Caco-2 (cell line): ENCODE measurements at regions of chr10 and their contacts with region 1.

Region 1: GRCh38 chr10:32207544-32207943 is 139.4 kb downstream of the EPC1 start:
- DNase-seq: peak; percentile 79 to 84
- H3K4me3 ChIP-seq: no peak overlapping the region
- H3K4me3 Mint-ChIP-seq: no peak overlapping the region
- H3K27ac Mint-ChIP-seq: no peak overlapping the region
- H3K4me1 ChIP-seq: peaks cover 5% of the 10 kb centered on the region; the same call in 1 of the 2 replicates
- H3K4me1 Mint-ChIP-seq: peaks cover 7% of the 10 kb centered on the region
- H3K27me3 ChIP-seq: no peaks in the 10 kb centered on the region
- H3K27me3 Mint-ChIP-seq: no peaks in the 10 kb centered on the region
- CTCF ChIP-seq: peak; percentile 90 to 97

Region 2: GRCh38 chr10:31836569-31837406 is 370.8 kb before region 1 on chr10:
- CTCF ChIA-PET with region 1: no interaction called
- POLR2A ChIA-PET with region 1: no interaction called
- intact Hi-C with region 1: loop called (anchors 1 kb)
- DNase-seq: peak in 1 of 2 experiments; percentile 62
- H3K4me3 ChIP-seq: no peak overlapping the region
- H3K4me3 Mint-ChIP-seq: no peak overlapping the region
- H3K27ac Mint-ChIP-seq: no peak overlapping the region
- H3K4me1 ChIP-seq: no peaks in the 10 kb centered on the region
- H3K4me1 Mint-ChIP-seq: no peaks in the 10 kb centered on the region
- H3K27me3 ChIP-seq: no peaks in the 10 kb centered on the region
- H3K27me3 Mint-ChIP-seq: no peaks in the 10 kb centered on the region
- CTCF ChIP-seq: peak; percentile 84 to 94

Region 3: GRCh38 chr10:31947144-31947926 is 260.2 kb before region 1 on chr10:
- CTCF ChIA-PET with region 1: no interaction called
- POLR2A ChIA-PET with region 1: no interaction called
- intact Hi-C with region 1: loop called (anchors 5 kb)
- DNase-seq: peak; percentile 74 to 84
- H3K4me3 ChIP-seq: peak overlapping the region; percentile 10
- H3K4me3 Mint-ChIP-seq: peak overlapping the region; percentile 65
- H3K27ac Mint-ChIP-seq: peak overlapping the region; percentile 70
- H3K4me1 ChIP-seq: peaks cover 42% of the 10 kb centered on the region
- H3K4me1 Mint-ChIP-seq: peaks cover 26% of the 10 kb centered on the region
- H3K27me3 ChIP-seq: no peaks in the 10 kb centered on the region
- H3K27me3 Mint-ChIP-seq: no peaks in the 10 kb centered on the region
- CTCF ChIP-seq: peak; percentile 47 to 82

Region 4: GRCh38 chr10:32005050-32005449 is 202.5 kb before region 1 on chr10:
- CTCF ChIA-PET with region 1: no interaction called
- POLR2A ChIA-PET with region 1: no interaction called
- intact Hi-C with region 1: loop called (anchors 2 kb)
- DNase-seq: peak; percentile 68 to 73
- H3K4me3 ChIP-seq: no peak overlapping the region
- H3K4me3 Mint-ChIP-seq: no peak overlapping the region
- H3K27ac Mint-ChIP-seq: no peak overlapping the region
- H3K4me1 ChIP-seq: no peaks in the 10 kb centered on the region; the same call in 1 of the 2 replicates
- H3K4me1 Mint-ChIP-seq: peaks cover 21% of the 10 kb centered on the region
- H3K27me3 ChIP-seq: no peaks in the 10 kb centered on the region
- H3K27me3 Mint-ChIP-seq: no peaks in the 10 kb centered on the region
- CTCF ChIP-seq: peak; percentile 78 to 83

Region 5: DNA sequence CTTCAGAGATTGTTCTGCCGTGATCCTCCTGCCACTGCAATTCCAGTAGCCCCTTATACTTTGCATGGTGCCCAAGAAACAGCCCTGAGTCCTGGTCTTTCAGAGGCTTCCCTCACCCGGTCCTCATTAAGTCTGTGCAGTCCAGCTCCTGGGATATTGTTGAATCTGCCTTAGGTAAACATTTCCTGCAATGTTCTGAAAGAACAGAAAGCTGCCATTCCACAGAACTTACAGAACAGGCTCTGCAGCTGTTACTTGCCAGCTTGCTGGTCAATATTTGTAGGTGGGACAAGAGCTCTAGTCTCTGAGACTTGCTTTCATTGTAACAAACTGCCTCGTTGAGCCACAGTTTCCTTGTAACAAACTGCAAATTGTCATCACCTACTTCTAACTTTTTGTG is 36.3 kb before region 1 on chr10:
- CTCF ChIA-PET with region 1: interaction called, 11 read pairs
- POLR2A ChIA-PET with region 1: no interaction called
- intact Hi-C with region 1: loop called (anchors 2 kb)
- DNase-seq: peak; percentile 87 to 89
- H3K4me3 ChIP-seq: no peak overlapping the region
- H3K4me3 Mint-ChIP-seq: peak overlapping the region; percentile 63
- H3K27ac Mint-ChIP-seq: peak overlapping the region; percentile 96
- H3K4me1 ChIP-seq: peaks cover 29% of the 10 kb centered on the region
- H3K4me1 Mint-ChIP-seq: peaks cover 23% of the 10 kb centered on the region
- H3K27me3 ChIP-seq: no peaks in the 10 kb centered on the region
- H3K27me3 Mint-ChIP-seq: no peaks in the 10 kb centered on the region
- CTCF ChIP-seq: no peak

Region 6: GRCh38 chr10:32232378-32232777 is 24.8 kb after region 1 on chr10:
- CTCF ChIA-PET with region 1: interaction called, 6 read pairs
- POLR2A ChIA-PET with region 1: interaction called, 16 read pairs
- intact Hi-C with region 1: no loop called
- DNase-seq: peak; percentile 56 to 64
- H3K4me3 ChIP-seq: no peak overlapping the region
- H3K4me3 Mint-ChIP-seq: no peak overlapping the region
- H3K27ac Mint-ChIP-seq: no peak overlapping the region
- H3K4me1 ChIP-seq: no peaks in the 10 kb centered on the region; the same call in 1 of the 2 replicates
- H3K4me1 Mint-ChIP-seq: no peaks in the 10 kb centered on the region
- H3K27me3 ChIP-seq: no peaks in the 10 kb centered on the region
- H3K27me3 Mint-ChIP-seq: no peaks in the 10 kb centered on the region
- CTCF ChIP-seq: no peak

Region 7: GRCh38 chr10:32367793-32368453 is 160.4 kb after region 1 on chr10:
- CTCF ChIA-PET with region 1: no interaction called
- POLR2A ChIA-PET with region 1: no interaction called
- intact Hi-C with region 1: loop called (anchors 5 kb)
- DNase-seq: peak; percentile 75 to 81
- H3K4me3 ChIP-seq: no peak overlapping the region
- H3K4me3 Mint-ChIP-seq: peak overlapping the region; percentile 22
- H3K27ac Mint-ChIP-seq: no peak overlapping the region
- H3K4me1 ChIP-seq: no peaks in the 10 kb centered on the region; the same call in 1 of the 2 replicates
- H3K4me1 Mint-ChIP-seq: peaks cover 11% of the 10 kb centered on the region
- H3K27me3 ChIP-seq: no peaks in the 10 kb centered on the region
- H3K27me3 Mint-ChIP-seq: no peaks in the 10 kb centered on the region
- CTCF ChIP-seq: peak; percentile 91 to 93

Region 8: GRCh38 chr10:32577448-32577847 is 369.9 kb after region 1 on chr10:
- CTCF ChIA-PET with region 1: no interaction called
- POLR2A ChIA-PET with region 1: no interaction called
- intact Hi-C with region 1: no loop called
- DNase-seq: no peak
- H3K4me3 ChIP-seq: no peak overlapping the region
- H3K4me3 Mint-ChIP-seq: no peak overlapping the region
- H3K27ac Mint-ChIP-seq: no peak overlapping the region
- H3K4me1 ChIP-seq: no peaks in the 10 kb centered on the region
- H3K4me1 Mint-ChIP-seq: no peaks in the 10 kb centered on the region
- H3K27me3 ChIP-seq: no peaks in the 10 kb centered on the region
- H3K27me3 Mint-ChIP-seq: peaks cover 4% of the 10 kb centered on the region
- CTCF ChIP-seq: no peak